ENCODE measurements at regions of chr17 and their contacts with region 1.

Region 1: GRCh38 chr17:58006924-58007780 is at the start of gene SRSF1:
- DNase-seq: peak; percentile 99
- ATAC-seq: peak; percentile 97
- total RNA-seq, gene SRSF1: 90.9 TPM

Region 2: GRCh38 chr17:58083491-58084316 is 76.6 kb after region 1 on chr17:
- intact Hi-C with region 1: loop called (anchors 2 kb)
- DNase-seq: peak; percentile 82
- ATAC-seq: peak; percentile 78

Region 3: DNA sequence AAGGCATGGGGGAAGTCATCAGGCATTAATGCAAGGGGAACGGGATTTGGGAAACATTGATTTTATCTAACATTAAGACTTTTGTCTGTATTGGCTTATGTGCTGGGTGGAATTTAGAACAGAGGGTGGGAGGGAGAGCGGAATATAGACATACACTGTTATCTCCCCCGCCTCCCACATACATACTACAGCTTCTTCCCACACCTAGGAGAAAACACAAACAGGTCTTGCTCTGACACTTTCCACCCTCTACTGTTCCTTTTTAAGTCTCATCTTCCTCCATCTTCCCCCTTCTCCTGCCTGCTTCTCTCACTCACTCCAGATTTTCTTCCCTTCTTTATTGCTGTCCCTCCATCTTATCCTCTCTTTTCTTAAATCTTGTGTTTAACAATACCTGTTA is 141.5 kb after region 1 on chr17:
- intact Hi-C with region 1: no loop called
- DNase-seq: no peak
- ATAC-seq: no peak